Right ventricle myocardium inferior (tissue), 1 donor: ENCODE measurements at regions of chr7 and their contacts with region 1.

Region 1: DNA sequence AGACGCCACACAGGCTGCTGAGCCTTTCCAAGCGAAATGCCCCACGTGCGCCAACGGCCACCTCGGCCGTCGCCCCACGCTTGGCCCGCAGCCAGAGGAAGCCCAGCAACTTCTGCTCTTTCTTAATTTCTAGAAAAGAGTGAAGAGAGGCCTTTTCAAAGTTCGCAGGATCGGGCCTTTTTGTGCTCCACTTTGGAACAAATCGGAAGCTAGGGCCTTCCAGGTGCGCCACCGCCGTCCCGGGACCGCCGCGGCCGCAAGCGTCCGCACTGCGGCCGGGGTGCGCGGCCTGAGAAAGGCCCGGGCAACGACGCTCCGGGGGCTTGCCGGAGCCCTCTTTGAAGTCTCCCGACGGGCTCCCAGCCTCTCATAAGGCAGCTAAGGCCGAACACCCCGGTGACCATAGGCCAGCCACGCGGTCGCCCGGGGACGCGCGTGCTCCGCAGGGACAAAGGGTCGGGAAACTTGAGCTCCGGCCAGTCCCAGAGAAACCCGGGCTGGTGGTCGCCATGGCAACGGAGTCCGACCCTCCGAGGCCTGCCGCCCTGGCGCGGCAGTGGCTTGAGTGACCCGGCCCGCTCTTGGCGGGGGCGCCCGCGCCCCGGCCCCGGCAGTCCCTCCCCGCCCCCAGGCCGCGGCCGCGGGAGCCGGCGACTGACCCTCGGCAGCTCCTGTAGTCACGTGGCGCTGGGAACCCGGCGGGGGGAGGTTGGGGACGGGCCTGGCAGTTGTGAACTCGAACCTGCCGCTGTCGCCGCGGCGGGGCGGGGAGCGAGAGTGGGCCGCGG is at the start of gene REPIN1:
- DNase-seq: peak; percentile 96
- ATAC-seq: peak; percentile 90
- total RNA-seq, gene REPIN1: 111 TPM

Region 2: DNA sequence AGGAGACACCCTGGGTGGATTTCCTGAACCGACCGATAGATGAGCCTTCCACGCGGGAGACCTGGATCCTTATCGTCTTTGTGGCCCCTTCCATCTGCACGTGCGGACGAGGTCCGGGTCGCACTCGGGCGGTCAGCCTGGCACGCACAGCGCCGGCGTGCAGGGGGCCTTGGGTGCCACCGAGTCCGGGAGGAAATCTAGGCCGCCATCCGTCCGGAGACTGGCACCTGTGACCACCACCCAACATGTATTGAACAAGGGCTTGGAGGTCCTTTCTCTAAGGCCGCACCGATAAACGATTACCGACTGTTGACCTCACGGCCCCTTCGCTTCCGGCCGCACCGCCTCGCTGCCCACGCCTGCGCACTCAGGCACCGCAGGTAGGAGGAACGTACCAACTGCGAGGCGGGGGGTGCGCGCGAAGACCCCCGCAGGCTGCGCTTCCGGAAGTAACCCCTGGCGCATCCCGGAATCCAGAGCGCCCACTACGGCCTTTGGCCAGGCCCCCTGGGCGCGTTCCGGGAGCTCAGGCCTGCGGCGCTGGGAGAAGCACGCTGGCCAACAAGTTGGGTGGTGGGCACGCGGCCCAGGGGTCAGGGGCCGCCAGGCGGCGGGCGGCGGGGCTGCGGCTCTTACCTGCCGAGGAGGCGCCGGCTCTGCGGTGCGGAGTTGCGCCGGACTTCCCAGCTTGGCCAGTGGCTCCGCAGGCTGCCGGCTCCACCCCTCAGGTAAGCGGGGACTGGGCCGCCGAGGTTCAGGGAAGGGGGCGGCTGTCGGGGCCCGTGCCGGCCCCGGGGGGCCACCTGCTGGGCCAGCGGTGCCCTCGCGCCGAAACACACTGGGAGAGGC is 45.2 kb before region 1 on chr7 and contains the starts of genes ACTR3C and LRRC61:
- intact Hi-C with region 1: loop called (anchors 2 kb)
- DNase-seq: peak; percentile 81
- ATAC-seq: peak; percentile 75
- total RNA-seq, gene ACTR3C: 5.7 TPM
- total RNA-seq, gene LRRC61: 4.7 TPM

Region 3: GRCh38 chr7:150378853-150379440 is 10.7 kb after region 1 on chr7 and contains the start of gene ZNF775:
- intact Hi-C with region 1: loop called (anchors 1 kb)
- DNase-seq: peak; percentile 99
- ATAC-seq: peak; percentile 98
- total RNA-seq, gene ZNF775: 3.3 TPM

Region 4: GRCh38 chr7:150390205-150390604 is 21.9 kb after region 1 on chr7:
- intact Hi-C with region 1: no loop called
- DNase-seq: no peak
- ATAC-seq: no peak

Region 5: GRCh38 chr7:150404805-150405583 is 36.7 kb after region 1 on chr7:
- intact Hi-C with region 1: loop called (anchors 2 kb)
- DNase-seq: peak; percentile 95
- ATAC-seq: peak; percentile 97